ENCODE measurements at regions of chr14 and their contacts with region 1.

Region 1: DNA sequence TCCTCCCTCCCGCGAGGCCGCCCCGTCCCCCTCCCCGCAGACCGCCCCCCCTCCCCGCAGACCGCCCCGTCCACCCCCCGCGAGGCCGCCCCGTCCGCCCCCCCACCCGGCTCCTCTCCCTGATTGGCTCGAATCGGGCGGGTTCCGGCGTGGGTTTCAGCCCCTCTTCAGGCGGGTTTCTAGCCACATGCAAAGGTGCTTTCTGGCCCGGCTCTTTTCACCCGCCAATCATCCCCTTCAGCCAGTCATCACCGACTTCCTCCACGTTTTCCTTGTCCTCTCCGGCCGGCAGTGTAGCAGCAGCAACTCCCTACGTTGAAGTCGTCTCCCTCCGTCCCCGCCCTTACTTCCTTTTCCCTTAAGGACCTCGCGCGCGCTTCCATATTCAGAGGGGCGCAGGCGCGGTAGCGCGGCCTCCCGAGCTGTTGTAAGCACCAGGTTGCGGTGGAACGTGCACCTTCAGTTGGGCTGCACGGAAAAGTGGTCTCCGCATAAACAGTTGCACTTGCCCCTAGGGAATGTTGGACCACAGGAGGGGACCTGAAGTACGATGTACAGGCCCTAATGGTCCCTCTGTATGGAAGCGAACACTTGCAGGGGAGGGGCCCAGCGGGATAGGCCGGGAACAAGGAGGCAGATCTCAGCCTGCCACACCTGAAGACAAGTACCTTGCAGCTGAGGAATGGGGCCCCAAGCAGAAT is 44.6 kb upstream of the ESR2 start:
- DNase-seq: peak; percentile 59 to 88 (median 75)
- ATAC-seq: peak; percentile 87 to 89 (median 88)
- H3K4me3 ChIP-seq: peak overlapping the region; percentile 66 to 83
- H3K4me3 Mint-ChIP-seq: peak overlapping the region; percentile 90
- H3K27ac ChIP-seq: peak overlapping the region; percentile 65
- H3K27ac Mint-ChIP-seq: peak overlapping the region; percentile 74 to 88
- H3K4me1 ChIP-seq: peaks cover 6 to 13% of the 10 kb centered on the region in 2 experiments
- H3K4me1 Mint-ChIP-seq: peaks cover 15 to 31% (median 20%) of the 10 kb centered on the region in 3 donors
- H3K27me3 ChIP-seq: no peaks in the 10 kb centered on the region
- H3K27me3 Mint-ChIP-seq: no peaks in the 10 kb centered on the region

Region 2: GRCh38 chr14:64636208-64636979 is 297.6 kb after region 1 on chr14:
- CTCF ChIA-PET with region 1: interaction called in 1 of 2 experiments, 29 read pairs
- POLR2A ChIA-PET with region 1: no interaction called
- DNase-seq: peak; percentile 26 to 84 (median 61)
- ATAC-seq: peak; percentile 87 to 91 (median 88)
- H3K4me3 ChIP-seq: no peak overlapping the region
- H3K4me3 Mint-ChIP-seq: no peak overlapping the region
- H3K27ac ChIP-seq: no peak overlapping the region
- H3K27ac Mint-ChIP-seq: no peak overlapping the region
- H3K4me1 ChIP-seq: peaks cover 0 to 7% of the 10 kb centered on the region in 2 experiments
- H3K4me1 Mint-ChIP-seq: peaks cover 0 to 4% (median 3%) of the 10 kb centered on the region in 3 donors
- H3K27me3 ChIP-seq: peaks cover 0 to 12% of the 10 kb centered on the region in 2 experiments
- H3K27me3 Mint-ChIP-seq: peaks cover 0 to 14% of the 10 kb centered on the region in 2 donors

Measured in T-cell (primary cell).